Left cardiac atrium (tissue), 4 donors: ENCODE measurements at regions of chr20 and their contacts with region 1.

Region 1: DNA sequence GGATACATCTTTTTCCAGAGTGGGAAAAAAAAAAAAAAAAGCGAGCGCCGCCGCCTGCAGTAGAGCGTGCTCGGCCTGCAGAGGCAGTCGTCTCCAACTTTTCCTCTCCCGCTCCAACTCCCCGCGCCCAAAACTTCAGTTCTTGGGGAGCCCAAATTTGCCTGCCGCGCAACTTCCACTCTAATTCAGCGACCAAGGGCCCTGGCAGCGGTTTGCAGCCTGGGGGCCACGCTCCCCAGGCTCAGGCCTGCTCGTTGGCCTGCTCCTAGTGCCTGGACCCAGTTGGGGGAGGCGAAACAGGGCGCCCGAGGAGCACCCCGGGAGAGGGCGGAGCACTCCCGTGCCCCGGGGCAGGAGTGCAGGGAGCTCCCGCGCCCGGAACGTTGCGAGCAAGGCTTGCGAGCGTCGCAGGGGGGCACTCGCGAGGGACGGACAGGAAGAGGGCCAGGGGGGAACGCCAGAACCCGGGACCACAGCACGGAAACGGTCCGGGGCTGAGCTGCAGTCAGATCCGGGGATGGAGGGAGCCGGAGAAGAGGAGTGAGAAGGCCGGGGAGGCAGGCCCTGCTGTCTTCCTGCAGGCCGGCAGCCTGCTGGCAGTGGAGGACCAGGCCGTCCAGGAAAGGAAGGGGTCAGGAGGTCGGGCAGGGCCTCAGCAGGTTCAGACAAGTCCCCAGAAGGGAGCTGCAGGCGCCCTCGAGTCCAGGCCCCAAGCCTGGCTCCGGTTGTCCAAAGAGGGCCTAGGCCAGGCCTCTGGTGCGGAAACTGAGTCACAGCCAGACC is at the start of gene STX16:
- DNase-seq: peak; percentile 91
- ATAC-seq: peak; percentile 94 to 96
- total RNA-seq, gene STX16: 22.8 to 32.0 TPM

Region 2: GRCh38 chr20:58236612-58237330 is 414.2 kb before region 1 on chr20:
- intact Hi-C with region 1: loop called in 1 of 2 experiments (anchors 5 kb)
- DNase-seq: peak; percentile 73
- ATAC-seq: peak; percentile 90 to 93

Region 3: GRCh38 chr20:58481481-58482021 is 169.4 kb before region 1 on chr20:
- intact Hi-C with region 1: loop called in 1 of 2 experiments (anchors 10 kb)
- DNase-seq: peak; percentile 63
- ATAC-seq: peak; percentile 72 to 76

Region 4: DNA sequence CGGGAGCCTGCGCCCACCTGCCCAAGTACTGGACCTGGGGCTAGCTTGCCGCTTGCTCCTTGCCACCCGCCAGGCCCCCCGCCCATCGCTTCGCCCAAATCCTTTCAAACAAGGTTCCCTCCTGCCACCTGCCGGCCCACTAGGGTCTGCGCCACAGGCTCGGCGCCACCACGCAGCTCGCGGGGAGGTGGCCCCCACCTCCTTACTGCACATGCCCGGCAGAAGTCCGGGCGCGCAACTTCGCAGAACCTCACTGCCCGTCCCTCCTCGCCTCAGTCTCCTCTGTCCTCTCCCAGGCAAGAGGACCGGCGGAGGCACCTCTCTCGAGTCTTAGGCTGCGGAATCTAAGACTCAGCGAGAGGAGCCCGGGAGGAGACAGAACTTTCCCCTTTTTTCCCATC is 188.5 kb after region 1 on chr20:
- intact Hi-C with region 1: loop called in 1 of 2 experiments (anchors 10 kb)
- DNase-seq: peak; percentile 53
- ATAC-seq: peak; percentile 73 to 77